ENCODE measurements at regions of chr5 and their contacts with region 1.

Region 1: DNA sequence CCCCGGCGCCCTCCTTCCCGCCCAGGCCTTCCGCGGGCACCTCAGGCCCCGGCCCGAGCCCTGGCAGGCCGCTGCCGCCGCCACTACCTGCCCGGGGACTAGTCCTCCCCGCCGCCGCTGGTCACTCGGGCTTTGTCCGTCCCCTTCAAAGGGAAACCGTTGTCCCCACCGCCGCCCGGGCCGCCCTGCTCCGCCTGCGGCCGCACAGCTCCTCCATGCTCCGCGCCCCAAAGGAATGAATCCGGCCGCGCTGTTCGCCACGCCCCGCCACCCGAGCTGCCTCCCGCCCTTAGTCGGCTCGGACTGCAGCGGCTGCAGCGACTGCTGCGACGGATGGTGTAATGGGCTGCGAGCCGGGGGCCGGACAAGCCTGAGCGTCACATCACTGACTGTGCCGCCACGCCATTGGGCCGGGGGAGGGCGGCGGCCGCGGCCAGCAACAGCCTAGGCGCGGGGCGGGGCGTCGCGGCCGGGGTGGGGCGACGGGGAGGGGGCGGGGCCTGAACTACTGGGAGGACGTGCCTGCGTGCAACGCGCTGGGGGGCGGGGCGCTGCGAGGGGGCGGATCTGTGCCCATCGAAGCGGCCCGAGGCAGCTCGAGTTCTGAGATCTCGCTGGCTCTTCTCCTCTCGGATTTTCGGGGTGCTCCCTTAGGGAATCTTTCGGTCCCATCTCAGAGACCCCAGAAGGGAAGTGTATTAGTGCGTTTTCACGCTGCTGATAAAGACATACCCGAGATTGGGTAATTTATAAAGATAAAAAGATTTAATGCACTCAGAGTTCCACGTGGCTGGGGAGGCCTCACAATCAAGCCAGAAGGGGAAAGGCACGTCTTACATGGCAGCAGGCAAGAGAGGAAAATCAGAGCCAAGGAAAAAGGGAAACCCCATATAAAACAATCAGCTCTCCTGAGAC is at the start of gene FEM1C:
- DNase-seq: peak; percentile 85 to 97 (median 93)
- ATAC-seq: peak; percentile 93
- H3K4me3 ChIP-seq: peak within 1 kb of the TSS; percentile 70
- H3K4me3 Mint-ChIP-seq: peak within 1 kb of the TSS; percentile 94 to 100 (median 96)
- H3K27ac ChIP-seq: peak within 1 kb of the TSS; percentile 96
- H3K27ac Mint-ChIP-seq: peak within 1 kb of the TSS; percentile 92 to 100 (median 96)
- H3K4me1 ChIP-seq: peaks cover 31 to 38% of the 10 kb centered on the region in 2 donors
- H3K4me1 Mint-ChIP-seq: peaks cover 36 to 49% (median 43%) of the 10 kb centered on the region in 7 donors
- H3K27me3 ChIP-seq: no peaks in the 10 kb centered on the region
- H3K27me3 Mint-ChIP-seq: no peaks in the 10 kb centered on the region
- total RNA-seq, gene FEM1C: 14.9 to 33.1 (median 18.5) TPM

Region 2: DNA sequence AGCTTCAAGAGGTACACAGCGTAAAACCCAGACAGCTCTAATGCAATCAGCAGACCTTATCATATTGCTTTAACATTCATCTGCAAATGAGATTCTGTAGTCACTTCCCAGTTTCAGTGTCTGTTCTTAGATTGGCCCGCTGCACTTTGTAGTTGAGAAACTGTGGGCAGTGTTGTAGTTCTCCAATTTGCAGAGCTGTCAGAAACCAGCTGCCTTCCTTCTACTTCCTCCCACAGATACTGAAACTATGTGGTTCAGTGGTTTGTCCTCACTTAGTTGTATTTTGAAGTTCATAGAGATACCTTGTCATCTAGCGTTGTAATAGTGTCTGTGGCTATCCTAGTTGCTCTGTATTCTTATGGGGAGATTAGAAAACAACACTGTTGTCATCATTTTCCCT is 335.4 kb before region 1 on chr5:
- CTCF ChIA-PET with region 1: no interaction called
- POLR2A ChIA-PET with region 1: no interaction called
- intact Hi-C with region 1: loop called in 1 of 2 experiments (anchors 1 kb)
- DNase-seq: peak in 8 of 9 donors; percentile 1 to 45 (median 15)
- ATAC-seq: peak; percentile 97
- H3K4me3 ChIP-seq: no peak overlapping the region
- H3K4me3 Mint-ChIP-seq: peak overlapping the region in 1 of 10 donors; percentile 77
- H3K27ac ChIP-seq: no peak overlapping the region
- H3K27ac Mint-ChIP-seq: peak overlapping the region in 3 of 9 donors; percentile 6 to 74 (median 62)
- H3K4me1 ChIP-seq: no peaks in the 10 kb centered on the region
- H3K4me1 Mint-ChIP-seq: peaks cover 5 to 19% (median 12%) of the 10 kb centered on the region in 7 donors
- H3K27me3 ChIP-seq: no peaks in the 10 kb centered on the region
- H3K27me3 Mint-ChIP-seq: no peaks in the 10 kb centered on the region

Region 3: DNA sequence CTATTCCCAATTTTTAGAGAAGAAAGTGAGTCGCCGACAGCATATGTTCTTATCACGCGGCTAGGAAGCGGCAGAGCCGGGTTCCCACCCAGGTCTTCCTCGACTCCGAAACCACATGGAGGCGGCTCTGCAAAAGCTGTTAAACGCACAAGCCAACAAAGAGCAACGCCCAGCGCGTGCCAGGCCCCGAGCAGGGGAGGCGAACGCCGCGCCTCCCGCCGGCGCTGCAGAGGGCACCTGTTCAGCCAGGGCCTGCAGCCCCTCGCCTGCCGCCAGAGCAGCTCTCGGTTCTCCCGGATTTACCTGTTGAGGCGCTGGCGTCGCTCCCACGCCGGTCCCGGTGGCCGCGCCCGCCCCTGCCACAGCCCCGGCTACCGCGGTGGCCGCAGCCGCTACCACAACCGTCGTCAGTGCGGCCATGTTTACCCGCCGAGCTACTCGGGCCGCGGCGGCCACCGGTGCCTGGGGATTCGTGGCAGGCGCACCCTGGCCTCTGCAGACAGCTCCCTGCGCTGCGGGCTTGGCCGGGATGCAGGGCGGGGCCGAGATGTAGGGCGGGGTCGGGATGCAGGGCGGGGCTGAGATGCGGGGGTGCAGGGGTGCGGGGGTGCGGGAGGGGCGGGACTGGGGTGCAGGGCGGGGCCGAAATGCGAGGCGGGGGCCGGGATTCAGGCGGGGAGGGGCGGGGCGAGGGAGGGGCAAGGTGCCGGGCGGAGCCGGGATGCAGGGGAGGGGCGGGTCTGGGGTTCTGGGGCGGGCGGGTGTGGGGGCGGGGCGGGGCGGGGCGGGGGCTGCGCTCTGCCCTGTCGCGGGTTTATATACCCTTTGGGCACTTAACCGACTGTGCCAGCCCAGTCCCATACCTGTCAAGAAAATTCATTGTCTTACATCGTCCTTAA is 248.3 kb before region 1 on chr5 and contains the start of gene CCDC112:
- CTCF ChIA-PET with region 1: no interaction called
- POLR2A ChIA-PET with region 1: interaction called, 9 read pairs
- intact Hi-C with region 1: loop called (anchors 1 kb)
- DNase-seq: peak; percentile 49 to 71 (median 67)
- ATAC-seq: peak; percentile 83
- H3K4me3 ChIP-seq: peak within 1 kb of the TSS; percentile 56
- H3K4me3 Mint-ChIP-seq: peak within 1 kb of the TSS; percentile 77 to 92 (median 89)
- H3K27ac ChIP-seq: peak within 1 kb of the TSS; percentile 47
- H3K27ac Mint-ChIP-seq: peak within 1 kb of the TSS in 8 of 9 donors; percentile 29 to 80 (median 69)
- H3K4me1 ChIP-seq: peaks cover 8 to 10% of the 10 kb centered on the region in 2 donors
- H3K4me1 Mint-ChIP-seq: peaks cover 5 to 18% (median 13%) of the 10 kb centered on the region in 7 donors
- H3K27me3 ChIP-seq: no peaks in the 10 kb centered on the region
- H3K27me3 Mint-ChIP-seq: peaks cover 0 to 69% (median 3%) of the 10 kb centered on the region in 5 donors
- total RNA-seq, gene CCDC112: 0.51 to 8.5 (median 3.9) TPM

Region 4: GRCh38 chr5:115530426-115530825 is 14.3 kb before region 1 on chr5:
- CTCF ChIA-PET with region 1: interaction called, 3 read pairs
- POLR2A ChIA-PET with region 1: interaction called, 7 read pairs
- intact Hi-C with region 1: loop called (anchors 1 kb)
- DNase-seq: no peak
- ATAC-seq: no peak
- H3K4me3 ChIP-seq: no peak overlapping the region
- H3K4me3 Mint-ChIP-seq: no peak overlapping the region
- H3K27ac ChIP-seq: no peak overlapping the region
- H3K27ac Mint-ChIP-seq: no peak overlapping the region
- H3K4me1 ChIP-seq: peaks cover 1 to 10% of the 10 kb centered on the region in 2 donors
- H3K4me1 Mint-ChIP-seq: peaks cover 30 to 90% (median 76%) of the 10 kb centered on the region in 7 donors
- H3K27me3 ChIP-seq: no peaks in the 10 kb centered on the region
- H3K27me3 Mint-ChIP-seq: no peaks in the 10 kb centered on the region

Region 5: GRCh38 chr5:115557667-115558387 is 13.1 kb after region 1 on chr5:
- CTCF ChIA-PET with region 1: no interaction called
- POLR2A ChIA-PET with region 1: no interaction called
- intact Hi-C with region 1: no loop called
- DNase-seq: no peak
- ATAC-seq: no peak
- H3K4me3 ChIP-seq: no peak overlapping the region
- H3K4me3 Mint-ChIP-seq: peak overlapping the region in 1 of 10 donors; percentile 1
- H3K27ac ChIP-seq: no peak overlapping the region
- H3K27ac Mint-ChIP-seq: peak overlapping the region in 3 of 9 donors; percentile 24 to 88 (median 43)
- H3K4me1 ChIP-seq: no peaks in the 10 kb centered on the region
- H3K4me1 Mint-ChIP-seq: peaks cover 0 to 9% (median 0%) of the 10 kb centered on the region in 7 donors
- H3K27me3 ChIP-seq: peaks cover 0 to 5% of the 10 kb centered on the region in 2 donors
- H3K27me3 Mint-ChIP-seq: peaks cover 7 to 19% (median 11%) of the 10 kb centered on the region in 5 donors

Region 6: GRCh38 chr5:115586601-115587048 is 41.9 kb after region 1 on chr5:
- CTCF ChIA-PET with region 1: no interaction called
- POLR2A ChIA-PET with region 1: interaction called, 4 read pairs
- intact Hi-C with region 1: loop called in 1 of 2 experiments (anchors 5 kb)
- DNase-seq: peak in 6 of 9 donors; percentile 13 to 38 (median 27)
- ATAC-seq: peak; percentile 56
- H3K4me3 ChIP-seq: no peak overlapping the region
- H3K4me3 Mint-ChIP-seq: no peak overlapping the region
- H3K27ac ChIP-seq: no peak overlapping the region
- H3K27ac Mint-ChIP-seq: no peak overlapping the region
- H3K4me1 ChIP-seq: no peaks in the 10 kb centered on the region
- H3K4me1 Mint-ChIP-seq: no peaks in the 10 kb centered on the region
- H3K27me3 ChIP-seq: no peaks in the 10 kb centered on the region
- H3K27me3 Mint-ChIP-seq: peaks cover 0 to 5% (median 0%) of the 10 kb centered on the region in 5 donors

Region 7: DNA sequence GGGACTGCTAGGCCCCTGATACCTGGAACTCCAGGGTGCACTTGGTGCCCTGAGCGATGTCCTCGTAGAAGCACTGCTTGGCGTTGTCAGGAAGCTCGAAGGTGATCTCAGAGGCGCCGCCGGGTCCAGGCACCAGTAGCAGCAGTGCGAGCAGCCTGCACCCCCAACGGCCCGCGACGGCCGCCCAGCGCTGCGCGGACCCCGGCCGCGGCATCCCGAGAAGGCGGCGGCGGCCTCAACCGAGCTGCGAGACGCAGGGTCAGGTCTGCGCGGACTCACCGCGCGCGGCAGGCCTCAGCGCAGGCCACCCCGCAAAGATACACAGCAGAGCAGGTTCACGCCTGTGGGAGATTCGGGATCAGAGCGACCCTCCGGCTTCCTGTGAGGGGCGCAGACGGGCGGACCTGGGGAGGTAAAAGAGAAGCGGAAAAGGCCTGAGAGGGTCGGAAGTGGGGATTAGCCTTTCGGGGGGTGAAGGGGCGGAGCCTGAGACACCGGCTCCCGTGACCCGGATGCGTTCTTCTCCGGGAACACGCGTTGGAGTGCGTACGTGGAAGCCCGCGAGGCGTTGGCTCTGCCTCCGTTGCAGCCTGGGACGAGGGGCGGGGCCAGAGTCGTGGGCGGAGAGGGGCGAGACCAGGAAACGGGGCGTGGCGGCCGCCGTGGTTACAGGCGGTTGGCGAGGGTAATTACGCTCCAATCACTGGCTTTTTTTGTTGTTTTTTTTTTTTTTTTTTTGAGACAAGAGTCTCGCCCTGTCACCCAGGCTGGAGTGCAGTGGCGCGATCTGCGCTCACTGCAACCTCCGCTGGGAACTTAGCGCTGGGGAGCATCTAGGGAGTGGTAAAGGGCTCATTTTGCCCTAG is 81.1 kb after region 1 on chr5 and contains the start of gene TMED7:
- CTCF ChIA-PET with region 1: no interaction called
- POLR2A ChIA-PET with region 1: interaction called, 24 read pairs
- intact Hi-C with region 1: loop called (anchors 1 kb)
- DNase-seq: peak; percentile 98 to 100 (median 99)
- ATAC-seq: peak; percentile 97
- H3K4me3 ChIP-seq: peak within 1 kb of the TSS; percentile 93
- H3K4me3 Mint-ChIP-seq: no peak within 1 kb of the TSS
- H3K27ac ChIP-seq: peak within 1 kb of the TSS; percentile 96
- H3K27ac Mint-ChIP-seq: peak within 1 kb of the TSS in 5 of 9 donors; percentile 93 to 98 (median 98)
- H3K4me1 ChIP-seq: peaks cover 20 to 35% of the 10 kb centered on the region in 2 donors
- H3K4me1 Mint-ChIP-seq: peaks cover 11 to 37% (median 27%) of the 10 kb centered on the region in 7 donors
- H3K27me3 ChIP-seq: no peaks in the 10 kb centered on the region
- H3K27me3 Mint-ChIP-seq: peaks cover 0 to 6% (median 0%) of the 10 kb centered on the region in 5 donors
- total RNA-seq, gene TMED7: 41.7 to 58.0 (median 47.5) TPM

Region 8: GRCh38 chr5:115657881-115658233 is 113.2 kb after region 1 on chr5:
- CTCF ChIA-PET with region 1: no interaction called
- POLR2A ChIA-PET with region 1: no interaction called
- intact Hi-C with region 1: no loop called
- DNase-seq: no peak
- ATAC-seq: no peak
- H3K4me3 ChIP-seq: no peak overlapping the region
- H3K4me3 Mint-ChIP-seq: no peak overlapping the region
- H3K27ac ChIP-seq: no peak overlapping the region
- H3K27ac Mint-ChIP-seq: no peak overlapping the region
- H3K4me1 ChIP-seq: no peaks in the 10 kb centered on the region
- H3K4me1 Mint-ChIP-seq: no peaks in the 10 kb centered on the region
- H3K27me3 ChIP-seq: no peaks in the 10 kb centered on the region
- H3K27me3 Mint-ChIP-seq: peaks cover 21 to 43% (median 26%) of the 10 kb centered on the region in 5 donors